Heart right ventricle (tissue), 16 donors: ENCODE measurements at regions of chrX and their contacts with region 1.

Region 1: DNA sequence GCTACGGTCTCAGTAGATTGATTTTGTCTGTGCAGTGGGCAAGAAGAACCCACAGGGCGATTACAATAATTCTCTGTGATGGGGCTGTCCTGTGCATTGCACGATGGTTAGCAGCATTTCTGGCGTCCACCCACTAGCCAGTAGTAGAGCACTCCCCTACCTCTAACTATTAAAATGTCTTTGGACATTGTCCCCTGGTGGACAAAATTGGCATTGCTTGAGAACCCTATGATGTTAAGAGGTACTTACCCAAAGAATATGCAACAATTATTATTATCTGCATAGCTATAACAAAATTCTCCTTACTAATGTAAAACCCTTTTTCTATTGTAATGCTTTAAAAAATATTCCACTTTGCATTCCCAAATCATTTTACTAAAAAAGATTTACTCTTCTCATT is 109.5 kb upstream of the VCX3A start:
- DNase-seq: no peak
- ATAC-seq: no peak
- H3K4me3 ChIP-seq: no peak overlapping the region
- H3K27ac ChIP-seq: no peak overlapping the region
- H3K4me1 ChIP-seq: no peaks in the 10 kb centered on the region
- H3K27me3 ChIP-seq: no peaks in the 10 kb centered on the region
- CTCF ChIP-seq: peak in 1 of 9 donors; percentile 37

Region 2: GRCh38 chrX:5916945-5917344 is 727.5 kb before region 1 on chrX:
- intact Hi-C with region 1: no loop called
- DNase-seq: no peak
- ATAC-seq: no peak
- H3K4me3 ChIP-seq: no peak overlapping the region
- H3K27ac ChIP-seq: no peak overlapping the region
- H3K4me1 ChIP-seq: no peaks in the 10 kb centered on the region
- H3K27me3 ChIP-seq: no peaks in the 10 kb centered on the region
- CTCF ChIP-seq: no peak

Region 3: GRCh38 chrX:6225911-6226595 is 418.4 kb before region 1 on chrX:
- intact Hi-C with region 1: loop called in 1 of 10 experiments (anchors 10 kb)
- DNase-seq: no peak
- ATAC-seq: peak in 5 of 8 donors; percentile 44 to 73 (median 58)
- H3K4me3 ChIP-seq: peak overlapping the region in 9 of 10 donors; percentile 25 to 52 (median 47)
- H3K27ac ChIP-seq: no peak overlapping the region
- H3K4me1 ChIP-seq: peaks cover 0 to 9% (median 0%) of the 10 kb centered on the region in 9 donors
- H3K27me3 ChIP-seq: peaks cover 0 to 70% (median 10%) of the 10 kb centered on the region in 7 donors
- CTCF ChIP-seq: peak in 1 of 9 donors; percentile 9

Region 4: DNA sequence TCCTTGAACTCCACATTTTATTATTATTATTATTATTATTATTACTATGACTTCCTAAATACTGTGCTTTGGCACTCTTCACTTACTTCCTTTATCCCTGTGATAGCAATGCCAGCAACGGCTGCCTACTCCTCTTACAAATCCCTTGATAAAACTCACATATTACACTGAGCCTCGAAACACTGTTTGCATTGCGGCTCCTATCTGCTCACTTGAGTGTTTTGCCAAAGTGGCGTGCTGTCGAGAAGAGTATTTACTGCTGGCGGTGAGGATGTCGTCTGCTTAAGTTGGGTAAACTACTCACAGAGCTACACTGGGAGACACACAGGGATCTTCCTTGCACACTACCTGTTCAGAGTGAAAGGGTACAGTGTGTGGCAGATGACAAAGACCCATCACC is 33.9 kb after region 1 on chrX:
- intact Hi-C with region 1: no loop called
- DNase-seq: no peak
- ATAC-seq: no peak
- H3K4me3 ChIP-seq: no peak overlapping the region
- H3K27ac ChIP-seq: no peak overlapping the region
- H3K4me1 ChIP-seq: no peaks in the 10 kb centered on the region
- H3K27me3 ChIP-seq: no peaks in the 10 kb centered on the region
- CTCF ChIP-seq: no peak

Region 5: DNA sequence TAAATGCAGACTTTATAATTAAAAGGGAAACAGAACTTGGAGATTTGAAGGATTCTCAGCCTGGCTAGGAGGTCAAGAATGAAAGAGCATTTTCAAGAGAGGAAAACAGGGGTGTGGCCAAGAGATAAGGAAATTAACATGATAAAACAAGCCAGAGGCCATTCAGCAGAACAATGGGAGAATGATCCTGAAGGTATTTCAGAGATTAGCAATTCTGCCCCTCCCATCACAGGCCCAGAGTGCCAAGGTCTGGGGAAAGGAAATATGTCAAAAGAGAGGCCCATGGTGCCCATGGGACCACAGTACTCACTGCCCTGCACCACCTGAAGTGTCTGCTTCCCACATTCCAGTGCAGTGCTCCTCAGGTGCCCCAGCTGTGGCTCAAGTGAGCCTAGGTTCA is 314.6 kb after region 1 on chrX:
- intact Hi-C with region 1: no loop called
- DNase-seq: no peak
- ATAC-seq: no peak
- H3K4me3 ChIP-seq: no peak overlapping the region
- H3K27ac ChIP-seq: no peak overlapping the region
- H3K4me1 ChIP-seq: no peaks in the 10 kb centered on the region
- H3K27me3 ChIP-seq: no peaks in the 10 kb centered on the region
- CTCF ChIP-seq: no peak

Region 6: DNA sequence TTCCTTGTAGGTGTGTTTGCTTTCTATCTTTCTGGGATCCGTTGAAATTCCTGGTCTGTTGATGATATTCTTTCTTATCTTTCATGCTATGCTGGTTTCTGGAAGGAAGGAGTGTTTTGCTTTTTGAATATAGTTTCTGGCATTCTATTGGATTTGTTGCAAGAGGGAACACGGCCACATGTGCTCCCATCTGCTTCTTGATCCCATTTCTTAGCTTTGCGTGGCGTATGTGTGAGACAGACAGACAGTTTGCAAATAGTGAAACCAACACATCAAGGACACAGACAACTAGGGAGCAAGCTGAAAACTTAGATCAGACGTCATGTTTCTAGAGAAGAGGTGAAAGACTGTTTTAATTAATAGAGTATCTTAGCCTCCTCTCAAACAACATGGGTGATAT is 765.5 kb after region 1 on chrX:
- intact Hi-C with region 1: no loop called
- DNase-seq: no peak
- ATAC-seq: no peak
- H3K4me3 ChIP-seq: no peak overlapping the region
- H3K27ac ChIP-seq: no peak overlapping the region
- H3K4me1 ChIP-seq: no peaks in the 10 kb centered on the region
- H3K27me3 ChIP-seq: no peaks in the 10 kb centered on the region
- CTCF ChIP-seq: no peak